ENCODE measurements at regions of chr11 and their contacts with region 1.

Region 1: GRCh38 chr11:15650105-15650938 is 535.6 kb downstream of the INSC start:
- DNase-seq: peak; percentile 86
- H3K27ac ChIP-seq: peak overlapping the region; percentile 36; the same call in 1 of the 2 replicates
- CTCF ChIP-seq: peak; percentile 92

Region 2: GRCh38 chr11:15819679-15820286 is 169.5 kb after region 1 on chr11:
- CTCF ChIA-PET with region 1: interaction called, 17 read pairs
- POLR2A ChIA-PET with region 1: no interaction called
- DNase-seq: peak; percentile 33
- H3K27ac ChIP-seq: no peak overlapping the region
- CTCF ChIP-seq: peak; percentile 63

Region 3: GRCh38 chr11:16613512-16614381 is 963.4 kb after region 1 on chr11:
- CTCF ChIA-PET with region 1: interaction called, 26 read pairs
- POLR2A ChIA-PET with region 1: no interaction called
- DNase-seq: peak; percentile 73
- H3K27ac ChIP-seq: no peak overlapping the region
- CTCF ChIP-seq: peak; percentile 90

Measured in RWPE1 (cell line).